MCF 10A (cell line): ENCODE measurements at regions of chr1 and their contacts with region 1.

Region 1: GRCh38 chr1:7539769-7540175 is 231.3 kb upstream of the VAMP3 start:
- DNase-seq: peak; percentile 85
- H3K4me3 Mint-ChIP-seq: no peak overlapping the region
- H3K27ac Mint-ChIP-seq: no peak overlapping the region
- H3K4me1 Mint-ChIP-seq: peaks cover 8% of the 10 kb centered on the region
- H3K27me3 Mint-ChIP-seq: no peaks in the 10 kb centered on the region
- CTCF ChIP-seq: peak; percentile 61

Region 2: DNA sequence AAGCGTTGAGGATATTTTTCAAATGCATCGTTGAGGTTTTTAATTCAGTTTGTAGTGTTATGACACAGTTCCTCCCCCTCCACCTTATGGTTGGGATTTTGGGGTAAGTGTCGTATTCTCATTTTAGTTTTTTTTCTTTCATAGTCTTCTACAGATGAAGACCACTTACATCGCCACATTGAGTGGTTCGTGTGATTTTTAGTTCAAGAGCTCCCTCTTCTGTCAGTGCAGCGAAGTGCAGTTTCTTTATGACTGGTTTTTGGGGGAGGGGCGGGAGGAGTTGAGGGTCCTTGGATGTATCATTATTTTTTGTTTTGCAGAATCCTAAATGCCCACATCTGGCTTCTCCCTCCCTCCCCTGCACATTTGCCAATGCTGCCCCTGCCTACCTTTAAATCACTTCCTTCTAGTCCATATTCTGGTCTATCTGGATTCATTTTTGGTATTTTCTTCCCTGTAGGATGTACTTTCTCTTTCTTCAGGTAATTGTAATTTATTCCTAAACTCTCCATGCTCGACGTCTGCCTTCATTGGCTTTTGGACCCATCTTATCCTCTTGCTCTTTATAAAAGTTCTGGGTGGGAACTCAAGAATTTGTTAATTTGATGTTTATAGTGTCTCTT is 321.5 kb before region 1 on chr1:
- CTCF ChIA-PET with region 1: no interaction called
- POLR2A ChIA-PET with region 1: no interaction called
- intact Hi-C with region 1: loop called (anchors 1 kb)
- DNase-seq: peak; percentile 57
- H3K4me3 Mint-ChIP-seq: no peak overlapping the region
- H3K27ac Mint-ChIP-seq: no peak overlapping the region
- H3K4me1 Mint-ChIP-seq: peaks cover 4% of the 10 kb centered on the region
- H3K27me3 Mint-ChIP-seq: peaks cover 22% of the 10 kb centered on the region
- CTCF ChIP-seq: peak; percentile 87

Region 3: DNA sequence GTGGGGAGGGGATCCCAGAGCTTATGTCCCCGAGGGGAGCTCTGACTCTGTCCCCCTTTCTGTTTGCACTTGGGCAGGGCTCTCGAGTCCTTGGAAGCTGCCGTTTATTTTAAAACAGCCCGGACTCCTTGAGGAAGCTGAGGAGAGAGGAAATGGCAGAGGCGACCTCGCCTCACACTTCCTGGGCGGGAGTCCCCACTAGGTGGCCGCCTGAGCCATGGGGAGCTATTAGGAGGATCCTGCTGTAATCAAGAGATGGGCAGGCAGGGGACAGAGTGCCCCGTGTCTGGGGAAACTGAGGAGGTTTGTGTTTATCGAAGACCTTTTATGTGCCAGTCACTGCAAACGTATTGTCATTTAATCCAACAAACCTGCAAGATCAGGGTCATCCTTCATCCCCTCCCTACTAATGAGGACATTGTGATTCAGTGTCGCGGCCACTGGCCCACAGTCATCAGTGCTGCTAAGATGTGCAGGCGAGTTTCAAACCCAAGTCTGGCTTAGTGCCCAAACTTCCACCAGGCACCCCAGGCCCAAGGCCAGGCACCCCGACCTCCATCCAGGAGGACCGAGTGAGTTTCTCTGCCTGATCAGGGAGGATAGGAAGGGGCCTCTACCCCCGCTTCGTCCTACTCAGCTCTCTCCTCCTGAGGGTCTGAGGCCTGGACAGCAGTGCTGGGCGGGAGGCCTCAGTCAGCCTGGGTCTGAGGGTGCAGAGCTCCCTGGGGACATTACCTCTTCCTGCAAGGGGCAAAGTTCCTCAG is 85.5 kb before region 1 on chr1:
- CTCF ChIA-PET with region 1: no interaction called
- POLR2A ChIA-PET with region 1: no interaction called
- intact Hi-C with region 1: loop called (anchors 1 kb)
- DNase-seq: no peak
- H3K4me3 Mint-ChIP-seq: no peak overlapping the region
- H3K27ac Mint-ChIP-seq: peak overlapping the region; percentile 70
- H3K4me1 Mint-ChIP-seq: no peaks in the 10 kb centered on the region
- H3K27me3 Mint-ChIP-seq: no peaks in the 10 kb centered on the region
- CTCF ChIP-seq: peak; percentile 20

Region 4: GRCh38 chr1:7646981-7647901 is 107.5 kb after region 1 on chr1:
- CTCF ChIA-PET with region 1: interaction called, 5 read pairs
- POLR2A ChIA-PET with region 1: no interaction called
- intact Hi-C with region 1: loop called (anchors 2 kb)
- DNase-seq: peak; percentile 61
- H3K4me3 Mint-ChIP-seq: no peak overlapping the region
- H3K27ac Mint-ChIP-seq: no peak overlapping the region
- H3K4me1 Mint-ChIP-seq: no peaks in the 10 kb centered on the region
- H3K27me3 Mint-ChIP-seq: peaks cover 9% of the 10 kb centered on the region
- CTCF ChIP-seq: peak; percentile 96